T-cell (primary cell): ENCODE measurements at regions of chr17 and their contacts with region 1.

Region 1: DNA sequence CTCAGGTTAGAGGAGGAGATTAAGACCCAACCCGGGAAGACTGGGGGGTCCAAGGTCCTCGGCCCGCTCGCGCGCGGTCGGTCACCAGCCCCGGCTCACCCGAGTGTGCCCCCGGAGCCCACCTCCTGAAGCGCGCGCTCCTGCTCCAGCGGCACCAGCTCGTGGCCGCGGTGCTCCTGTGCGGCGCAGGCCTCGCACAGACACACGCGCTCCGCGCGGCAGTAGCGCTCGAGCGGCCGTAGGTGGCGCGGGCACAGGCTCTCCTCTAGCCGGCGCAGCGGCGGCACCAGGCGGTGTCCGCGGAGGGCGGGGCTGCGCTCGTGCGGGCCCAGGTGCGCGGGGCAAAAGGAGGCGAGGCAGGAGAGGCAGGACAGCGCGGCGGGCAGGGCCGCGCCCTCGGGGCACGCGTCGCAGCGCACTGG is 618 bp downstream of the TRIM47 start:
- DNase-seq: peak; percentile 35 to 83 (median 59)
- ATAC-seq: peak; percentile 73 to 79 (median 76)
- H3K4me3 ChIP-seq: peak overlapping the region; percentile 29 to 67
- H3K4me3 Mint-ChIP-seq: peak overlapping the region; percentile 78 to 88 (median 85)
- H3K27ac ChIP-seq: peak overlapping the region; percentile 79
- H3K27ac Mint-ChIP-seq: peak overlapping the region; percentile 90 to 94
- H3K4me1 ChIP-seq: peaks cover 17 to 64% of the 10 kb centered on the region in 2 experiments
- H3K4me1 Mint-ChIP-seq: peaks cover 39 to 56% (median 41%) of the 10 kb centered on the region in 3 donors
- H3K27me3 ChIP-seq: peaks cover 2 to 27% of the 10 kb centered on the region in 2 experiments
- H3K27me3 Mint-ChIP-seq: peaks cover 0 to 4% of the 10 kb centered on the region in 2 donors

Region 2: GRCh38 chr17:75889454-75889853 is 11.7 kb after region 1 on chr17:
- CTCF ChIA-PET with region 1: interaction called in 1 of 2 experiments, 6 read pairs
- POLR2A ChIA-PET with region 1: interaction called in 1 of 2 experiments, 15 read pairs
- DNase-seq: no peak
- ATAC-seq: no peak
- H3K4me3 ChIP-seq: no peak overlapping the region
- H3K4me3 Mint-ChIP-seq: no peak overlapping the region
- H3K27ac ChIP-seq: no peak overlapping the region
- H3K27ac Mint-ChIP-seq: no peak overlapping the region
- H3K4me1 ChIP-seq: peaks cover 0 to 10% of the 10 kb centered on the region in 2 experiments
- H3K4me1 Mint-ChIP-seq: peaks cover 9 to 11% (median 9%) of the 10 kb centered on the region in 3 donors
- H3K27me3 ChIP-seq: no peaks in the 10 kb centered on the region
- H3K27me3 Mint-ChIP-seq: no peaks in the 10 kb centered on the region